Common myeloid progenitor, CD34-positive (primary cell): ENCODE measurements at regions of chr6 and their contacts with region 1.

Region 1: DNA sequence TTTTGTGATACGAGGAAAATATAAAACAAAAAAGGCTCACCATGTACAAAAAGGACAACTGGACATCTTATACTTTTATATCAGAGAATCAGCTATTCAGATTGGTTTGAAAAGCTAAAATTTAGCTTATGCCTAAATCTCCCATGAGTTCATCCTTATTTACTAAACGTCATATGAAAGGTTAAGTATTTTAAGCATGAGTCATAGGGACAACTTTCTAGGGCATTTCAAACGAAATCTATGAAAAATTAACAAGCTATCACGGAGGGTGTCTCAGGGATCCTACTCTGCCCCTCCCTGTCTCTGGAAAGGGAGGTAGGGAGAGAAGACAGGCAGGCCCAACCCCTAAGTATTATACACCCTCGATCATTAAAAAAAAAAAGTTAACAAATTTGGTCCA is 124.1 kb upstream of the LOC128125822 start:
- DNase-seq: no peak
- H3K4me3 ChIP-seq: no peak overlapping the region
- H3K27ac ChIP-seq: no peak overlapping the region
- H3K4me1 ChIP-seq: no peaks in the 10 kb centered on the region
- H3K27me3 ChIP-seq: no peaks in the 10 kb centered on the region

Region 2: DNA sequence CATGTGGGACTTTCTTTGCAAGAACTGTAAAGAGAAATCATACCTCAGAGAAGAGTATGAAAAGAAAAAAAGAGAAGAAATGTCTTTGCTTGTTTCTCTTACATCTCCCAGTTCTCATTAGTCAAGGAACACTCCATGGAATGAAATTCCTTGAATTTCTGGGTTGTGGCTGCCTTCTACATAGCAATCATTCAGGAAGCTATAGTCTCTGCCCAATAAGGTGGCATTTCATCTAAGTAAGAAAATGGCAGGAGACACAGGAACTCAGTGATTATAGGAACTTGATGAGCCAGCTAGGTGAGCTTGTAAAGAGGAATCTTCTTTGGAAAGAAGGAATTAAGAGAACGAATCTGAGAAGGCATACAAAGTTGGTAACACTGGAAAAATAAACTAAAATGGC is 433.9 kb before region 1 on chr6:
- CTCF ChIA-PET with region 1: no interaction called
- POLR2A ChIA-PET with region 1: interaction called, 12 read pairs
- DNase-seq: no peak
- H3K4me3 ChIP-seq: no peak overlapping the region
- H3K27ac ChIP-seq: no peak overlapping the region
- H3K4me1 ChIP-seq: no peaks in the 10 kb centered on the region
- H3K27me3 ChIP-seq: no peaks in the 10 kb centered on the region

Region 3: DNA sequence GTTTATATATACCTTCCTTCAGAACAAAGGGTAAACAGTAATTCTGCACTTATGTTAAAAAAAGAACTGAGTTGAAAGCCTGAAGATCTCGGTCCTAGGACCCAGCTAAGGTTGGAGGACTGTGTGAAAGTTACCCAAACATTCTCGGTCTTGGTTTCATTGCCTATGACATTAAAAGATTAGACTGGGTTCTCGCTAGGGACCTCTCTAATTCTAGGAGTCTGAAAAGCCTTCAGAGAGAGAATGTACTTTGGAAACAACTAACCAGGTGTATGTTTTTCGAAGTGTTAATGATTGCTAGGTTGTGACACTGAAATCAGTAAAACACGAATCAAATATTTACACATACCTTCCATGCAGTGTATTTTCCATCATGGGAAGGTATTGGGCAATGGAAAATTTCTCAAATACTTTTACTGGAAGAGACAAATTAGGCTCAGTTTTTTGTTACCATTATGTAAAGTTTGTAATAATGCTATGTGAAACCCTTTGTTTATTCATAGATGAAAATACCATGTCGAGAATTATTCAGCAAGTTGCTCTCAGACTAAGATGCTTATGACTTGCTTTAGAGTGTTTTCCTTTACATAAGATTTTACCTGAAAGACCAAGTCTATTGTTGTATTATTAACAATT is 10.4 kb after region 1 on chr6:
- CTCF ChIA-PET with region 1: no interaction called
- POLR2A ChIA-PET with region 1: no interaction called
- DNase-seq: no peak
- H3K4me3 ChIP-seq: no peak overlapping the region
- H3K27ac ChIP-seq: no peak overlapping the region
- H3K4me1 ChIP-seq: no peaks in the 10 kb centered on the region
- H3K27me3 ChIP-seq: no peaks in the 10 kb centered on the region